Psoas muscle (tissue), 8 donors: ENCODE measurements at regions of chr15 and their contacts with region 1.

Region 1: GRCh38 chr15:85831415-85832113 is 36.8 kb upstream of the KLHL25 start:
- DNase-seq: peak; percentile 56 to 78
- ATAC-seq: peak; percentile 84 to 96 (median 90)
- H3K4me3 ChIP-seq: no peak overlapping the region
- H3K27ac ChIP-seq: no peak overlapping the region
- H3K4me1 ChIP-seq: no peaks in the 10 kb centered on the region
- H3K27me3 ChIP-seq: no peaks in the 10 kb centered on the region
- CTCF ChIP-seq: peak; percentile 63

Region 2: GRCh38 chr15:85296615-85297402 is 534.8 kb before region 1 on chr15:
- intact Hi-C with region 1: loop called in 1 of 2 experiments (anchors 10 kb)
- DNase-seq: peak in 1 of 2 donors; percentile 59
- ATAC-seq: peak; percentile 91 to 98 (median 95)
- H3K4me3 ChIP-seq: peak overlapping the region; percentile 57
- H3K27ac ChIP-seq: no peak overlapping the region
- H3K4me1 ChIP-seq: no peaks in the 10 kb centered on the region
- H3K27me3 ChIP-seq: no peaks in the 10 kb centered on the region
- CTCF ChIP-seq: peak; percentile 80

Region 3: GRCh38 chr15:85730001-85730820 is 101.4 kb before region 1 on chr15:
- intact Hi-C with region 1: loop called (anchors 2 kb)
- DNase-seq: no peak
- ATAC-seq: peak; percentile 67 to 81 (median 74)
- H3K4me3 ChIP-seq: no peak overlapping the region
- H3K27ac ChIP-seq: no peak overlapping the region
- H3K4me1 ChIP-seq: no peaks in the 10 kb centered on the region
- H3K27me3 ChIP-seq: no peaks in the 10 kb centered on the region
- CTCF ChIP-seq: peak; percentile 78

Region 4: GRCh38 chr15:85749261-85750151 is 82.1 kb before region 1 on chr15:
- intact Hi-C with region 1: loop called in 1 of 2 experiments (anchors 5 kb)
- DNase-seq: peak in 1 of 2 donors; percentile 84
- ATAC-seq: peak; percentile 51 to 81 (median 69)
- H3K4me3 ChIP-seq: peak overlapping the region; percentile 49
- H3K27ac ChIP-seq: peak overlapping the region; percentile 64
- H3K4me1 ChIP-seq: peaks cover 33% of the 10 kb centered on the region
- H3K27me3 ChIP-seq: no peaks in the 10 kb centered on the region
- CTCF ChIP-seq: no peak

Region 5: DNA sequence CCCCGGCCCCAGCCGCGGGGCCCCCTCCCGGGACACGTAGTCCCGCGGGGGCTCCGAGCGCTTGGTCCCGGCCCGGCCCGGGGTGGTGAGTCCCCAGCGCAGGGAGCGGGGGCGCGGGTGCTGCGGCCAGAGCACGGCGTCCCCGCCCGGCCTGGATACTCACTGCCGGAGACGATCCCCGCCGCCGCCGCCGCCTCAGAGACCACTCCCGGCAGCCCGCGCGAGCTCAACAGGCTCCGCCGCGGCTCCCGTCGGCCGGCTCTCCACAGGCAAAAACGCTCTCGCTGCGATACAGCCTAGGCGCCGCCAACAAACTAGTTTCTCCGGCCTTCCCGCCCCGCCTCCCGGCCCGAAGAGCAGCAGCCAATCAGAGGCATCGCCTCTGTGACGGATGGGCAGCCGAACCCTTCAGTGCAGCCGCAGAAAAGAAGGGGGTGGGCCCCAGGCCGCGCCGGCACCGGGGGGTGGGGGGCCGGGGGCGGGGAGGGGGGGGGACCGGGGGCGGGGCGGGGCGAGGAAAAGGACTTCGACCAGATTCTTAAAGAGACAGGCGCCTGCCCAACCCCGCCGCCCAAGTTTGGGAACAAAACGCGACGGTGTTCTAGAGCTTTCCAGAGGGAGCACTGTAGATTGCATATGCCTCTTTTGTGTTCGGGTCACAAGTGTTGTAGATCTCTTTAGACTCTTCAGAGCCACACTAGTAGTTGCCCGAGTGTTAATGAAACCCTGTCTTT is 36.8 kb before region 1 on chr15 and contains the start of gene KLHL25:
- intact Hi-C with region 1: loop called in 1 of 2 experiments (anchors 1 kb)
- DNase-seq: peak; percentile 95 to 97
- ATAC-seq: peak; percentile 94 to 96 (median 96)
- H3K4me3 ChIP-seq: peak within 1 kb of the TSS; percentile 74
- H3K27ac ChIP-seq: peak within 1 kb of the TSS; percentile 95
- H3K4me1 ChIP-seq: peaks cover 16% of the 10 kb centered on the region
- H3K27me3 ChIP-seq: no peaks in the 10 kb centered on the region
- CTCF ChIP-seq: no peak
- total RNA-seq, gene KLHL25: 5.5 to 15.7 (median 10.6) TPM